AG04450 (cell line): ENCODE measurements at regions of chr14 and their contacts with region 1.

Region 1: GRCh38 chr14:36553656-36554260 is 28.7 kb downstream of the NKX2-8 start:
- DNase-seq: peak; percentile 6
- H3K4me3 ChIP-seq: no peak overlapping the region
- H3K27ac ChIP-seq: no peak overlapping the region
- H3K27me3 ChIP-seq: peaks cover 7% of the 10 kb centered on the region
- CTCF ChIP-seq: peak; percentile 81

Region 2: DNA sequence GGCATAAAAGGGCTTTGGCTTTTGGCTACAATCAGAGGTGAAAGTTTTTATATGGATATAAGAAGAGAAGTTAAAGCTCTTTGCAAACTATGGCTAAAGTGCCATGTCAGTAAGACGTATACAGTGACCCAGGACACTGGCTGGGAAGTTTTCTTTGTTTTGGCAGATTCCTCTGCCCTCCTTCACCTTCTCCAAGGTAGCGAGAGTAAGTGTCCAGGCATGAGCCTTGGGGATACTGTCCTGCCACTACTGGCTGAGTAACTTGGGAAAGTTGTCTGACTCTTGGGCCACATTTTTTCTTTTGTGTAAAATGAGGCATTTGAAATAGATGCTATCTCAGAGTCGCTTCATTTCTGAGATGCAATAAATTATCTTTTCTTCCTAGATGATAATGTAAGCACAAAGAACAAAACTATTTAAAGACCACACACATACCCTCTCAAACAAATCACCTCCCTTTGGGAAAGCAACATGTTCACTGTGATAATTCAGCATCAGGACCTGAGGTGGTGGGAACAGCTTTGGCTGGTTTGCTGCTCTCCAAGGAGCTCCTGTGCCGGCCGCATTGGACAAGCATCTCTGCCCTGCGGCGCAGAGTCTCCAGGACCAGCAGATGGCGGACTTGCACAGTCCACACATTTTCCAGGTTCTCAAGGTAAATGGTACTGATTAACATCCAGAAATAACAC is 483.6 kb before region 1 on chr14:
- CTCF ChIA-PET with region 1: interaction called, 15 read pairs
- POLR2A ChIA-PET with region 1: no interaction called
- DNase-seq: peak; percentile 32
- H3K4me3 ChIP-seq: no peak overlapping the region
- H3K27ac ChIP-seq: no peak overlapping the region
- H3K27me3 ChIP-seq: no peaks in the 10 kb centered on the region
- CTCF ChIP-seq: peak; percentile 92

Region 3: GRCh38 chr14:36570065-36570464 is 16.3 kb after region 1 on chr14:
- CTCF ChIA-PET with region 1: interaction called, 13 read pairs
- POLR2A ChIA-PET with region 1: no interaction called
- DNase-seq: no peak
- H3K4me3 ChIP-seq: no peak overlapping the region
- H3K27ac ChIP-seq: no peak overlapping the region
- H3K27me3 ChIP-seq: peaks cover 2% of the 10 kb centered on the region
- CTCF ChIP-seq: no peak

Region 4: GRCh38 chr14:36604757-36605505 is 51.2 kb after region 1 on chr14:
- CTCF ChIA-PET with region 1: interaction called, 63 read pairs
- POLR2A ChIA-PET with region 1: no interaction called
- DNase-seq: peak; percentile 20
- H3K4me3 ChIP-seq: no peak overlapping the region
- H3K27ac ChIP-seq: no peak overlapping the region
- H3K27me3 ChIP-seq: no peaks in the 10 kb centered on the region
- CTCF ChIP-seq: peak; percentile 84

Region 5: DNA sequence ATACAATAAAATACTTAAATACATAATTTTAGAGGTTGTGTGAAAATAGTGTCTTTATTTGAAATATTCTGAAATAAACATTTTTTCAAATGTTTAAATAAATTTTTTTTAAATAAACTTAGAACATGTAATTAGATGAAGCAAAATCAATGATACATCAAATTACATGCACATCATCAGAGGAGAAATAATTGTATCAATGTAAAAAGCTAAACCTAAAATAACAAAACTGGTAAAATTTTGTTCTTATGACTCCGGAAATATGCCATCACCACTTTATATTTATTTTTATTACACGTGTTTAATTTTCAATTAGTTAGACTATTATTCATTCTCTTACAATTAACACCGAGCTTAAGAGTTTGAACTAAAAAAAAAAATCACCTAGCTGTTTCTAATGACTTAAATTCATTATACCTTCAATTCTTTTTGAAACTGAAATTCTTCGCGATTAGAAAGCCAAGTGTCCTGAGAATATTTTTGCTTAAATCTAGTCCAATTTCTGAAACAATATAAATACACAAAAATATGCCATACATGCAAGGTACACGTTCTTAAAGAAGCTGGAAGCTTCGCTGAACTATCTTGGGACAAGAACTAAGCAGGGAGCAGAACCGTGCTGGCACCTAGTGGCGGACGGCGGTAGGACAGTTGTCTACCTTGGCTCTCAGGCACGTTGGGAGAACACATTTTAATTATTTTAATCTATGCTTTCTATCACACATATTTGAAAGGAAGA is 388.2 kb after region 1 on chr14:
- CTCF ChIA-PET with region 1: interaction called, 47 read pairs
- POLR2A ChIA-PET with region 1: no interaction called
- DNase-seq: no peak
- H3K4me3 ChIP-seq: no peak overlapping the region
- H3K27ac ChIP-seq: no peak overlapping the region
- H3K27me3 ChIP-seq: no peaks in the 10 kb centered on the region
- CTCF ChIP-seq: peak; percentile 99

Region 6: DNA sequence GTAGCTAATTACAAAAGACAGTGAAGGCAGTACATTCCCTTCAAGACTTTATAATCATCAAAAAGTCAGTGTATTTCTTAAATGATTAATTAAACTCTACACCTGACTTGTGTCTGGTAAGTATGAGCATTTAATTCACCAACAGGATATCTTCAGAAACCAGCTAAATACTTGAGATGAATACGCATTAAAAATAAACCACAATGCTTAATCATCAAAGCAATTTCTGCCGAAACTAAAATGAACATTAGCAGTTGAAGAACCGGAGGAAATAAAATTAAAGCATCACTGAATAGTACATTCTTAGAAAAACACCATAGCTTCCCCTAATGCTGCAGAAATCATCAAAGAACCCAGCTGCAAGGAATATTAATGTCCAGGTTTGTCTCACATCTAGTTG is 586.0 kb after region 1 on chr14:
- CTCF ChIA-PET with region 1: interaction called, 12 read pairs
- POLR2A ChIA-PET with region 1: no interaction called
- DNase-seq: no peak
- H3K4me3 ChIP-seq: no peak overlapping the region
- H3K27ac ChIP-seq: no peak overlapping the region
- H3K27me3 ChIP-seq: no peaks in the 10 kb centered on the region
- CTCF ChIP-seq: no peak

Region 7: DNA sequence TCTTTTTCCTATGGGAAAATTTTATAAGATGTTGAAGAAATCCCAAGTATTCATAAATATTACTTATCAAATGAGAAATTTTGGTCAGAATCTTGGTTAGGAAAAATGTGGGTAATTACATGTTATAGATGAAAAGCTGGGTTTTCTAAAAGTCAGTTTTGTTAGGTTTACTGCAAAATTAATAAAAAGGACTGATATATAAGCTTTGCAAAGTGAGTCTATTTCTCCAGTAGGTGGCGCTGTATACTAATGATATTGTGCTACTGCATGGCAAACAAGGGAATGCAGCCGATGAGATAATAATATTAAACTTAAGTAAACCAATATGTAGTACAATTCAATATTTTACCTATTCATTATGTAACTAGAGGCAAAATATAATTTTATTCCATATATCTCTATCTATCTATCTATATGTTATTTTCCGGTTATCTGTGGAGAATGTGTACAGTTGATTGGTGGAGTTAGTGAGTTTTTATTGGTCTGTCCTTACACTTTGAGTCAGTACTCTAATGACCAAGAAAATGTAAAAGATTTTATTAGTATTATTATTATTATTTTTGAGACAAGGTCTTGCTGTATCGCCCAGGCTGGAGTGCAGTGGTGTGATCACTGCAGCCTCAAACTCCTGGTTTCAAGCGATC is 676.9 kb after region 1 on chr14:
- CTCF ChIA-PET with region 1: interaction called, 14 read pairs
- POLR2A ChIA-PET with region 1: no interaction called
- DNase-seq: peak; percentile 38
- H3K4me3 ChIP-seq: no peak overlapping the region
- H3K27ac ChIP-seq: no peak overlapping the region
- H3K27me3 ChIP-seq: no peaks in the 10 kb centered on the region
- CTCF ChIP-seq: peak; percentile 76